B cell (primary cell): ENCODE measurements at regions of chr11 and their contacts with region 1.

Region 1: DNA sequence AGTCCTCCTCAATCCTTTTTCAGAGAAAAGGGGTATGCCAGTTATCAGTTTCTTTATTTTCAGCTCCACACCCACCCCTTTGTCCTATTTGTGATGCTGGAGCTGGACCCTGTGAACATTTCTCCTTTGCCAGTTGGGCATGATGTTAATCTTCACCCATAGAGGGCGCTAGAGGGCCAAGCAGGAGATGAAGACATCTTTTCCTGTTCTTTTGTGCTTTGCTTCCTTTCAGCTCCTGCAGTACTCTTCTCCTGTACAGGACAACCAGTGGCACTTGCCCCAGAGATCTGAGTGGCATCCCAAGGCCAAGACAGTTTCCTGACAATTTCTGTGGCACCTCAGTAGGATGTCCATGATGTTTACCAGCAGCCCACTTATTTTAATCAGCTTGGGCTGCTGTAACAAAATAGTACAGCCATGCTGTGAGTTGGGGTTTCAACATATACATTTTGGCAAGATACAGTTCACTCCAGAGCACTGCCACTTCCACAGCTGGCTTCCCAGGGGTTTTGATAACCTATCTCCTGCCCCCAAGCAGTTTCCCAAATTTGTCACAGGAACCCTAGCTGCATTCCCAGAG is 4.6 kb downstream of the SAA2 start:
- DNase-seq: peak; percentile 77
- ATAC-seq: no peak
- H3K4me3 ChIP-seq: no peak overlapping the region
- H3K4me3 Mint-ChIP-seq: no peak overlapping the region
- H3K27ac ChIP-seq: no peak overlapping the region
- H3K27ac Mint-ChIP-seq: peak overlapping the region; percentile 12
- H3K4me1 ChIP-seq: peaks cover 2 to 19% of the 10 kb centered on the region in 2 donors
- H3K4me1 Mint-ChIP-seq: peaks cover 15% of the 10 kb centered on the region
- H3K27me3 ChIP-seq: peaks cover 0 to 7% (median 6%) of the 10 kb centered on the region in 4 experiments
- H3K27me3 Mint-ChIP-seq: peaks cover 14% of the 10 kb centered on the region
- CTCF ChIP-seq: peak; percentile 90

Region 2: GRCh38 chr11:18229501-18229900 is 14.4 kb before region 1 on chr11:
- CTCF ChIA-PET with region 1: interaction called, 10 read pairs
- POLR2A ChIA-PET with region 1: no interaction called
- intact Hi-C with region 1: no loop called
- DNase-seq: peak; percentile 60
- ATAC-seq: peak; percentile 87
- H3K4me3 ChIP-seq: no peak overlapping the region
- H3K4me3 Mint-ChIP-seq: peak overlapping the region; percentile 37
- H3K27ac ChIP-seq: peak overlapping the region; percentile 25 to 61
- H3K27ac Mint-ChIP-seq: peak overlapping the region; percentile 75
- H3K4me1 ChIP-seq: peaks cover 23 to 30% of the 10 kb centered on the region in 2 donors
- H3K4me1 Mint-ChIP-seq: peaks cover 17% of the 10 kb centered on the region
- H3K27me3 ChIP-seq: no peaks in the 10 kb centered on the region
- H3K27me3 Mint-ChIP-seq: peaks cover 3% of the 10 kb centered on the region
- CTCF ChIP-seq: no peak

Region 3: DNA sequence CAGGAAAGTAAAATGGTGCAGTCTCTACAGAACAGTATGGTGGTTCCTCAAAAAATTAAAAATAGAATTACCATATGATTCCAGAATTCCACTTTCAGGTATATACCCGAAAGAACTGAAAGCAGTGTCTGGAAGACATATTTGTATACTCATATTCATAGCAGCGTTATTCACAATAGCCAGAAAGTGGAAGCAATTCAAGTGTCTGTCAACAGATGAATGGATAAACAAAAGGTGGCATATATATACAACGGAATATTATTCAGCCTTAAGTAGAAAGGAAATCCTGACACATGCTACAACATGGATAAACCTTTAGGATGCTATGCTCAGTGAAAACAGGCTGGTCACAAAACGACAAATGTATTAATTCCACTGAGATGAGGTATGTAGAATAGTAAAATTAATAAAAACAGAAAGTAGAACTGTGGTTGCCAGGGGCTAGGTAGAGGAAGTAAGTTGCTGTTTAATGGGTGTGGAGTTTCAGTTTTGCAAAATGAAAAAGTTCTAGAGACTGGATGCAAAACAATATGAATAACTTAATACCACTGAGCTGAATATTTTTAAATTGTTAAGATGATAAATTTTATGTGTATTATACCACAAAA is 36.7 kb after region 1 on chr11:
- CTCF ChIA-PET with region 1: interaction called, 9 read pairs
- POLR2A ChIA-PET with region 1: no interaction called
- intact Hi-C with region 1: loop called (anchors 5 kb)
- DNase-seq: peak; percentile 64
- ATAC-seq: peak; percentile 78
- H3K4me3 ChIP-seq: peak overlapping the region in 3 of 5 experiments; percentile 13 to 45 (median 44)
- H3K4me3 Mint-ChIP-seq: peak overlapping the region; percentile 78
- H3K27ac ChIP-seq: peak overlapping the region; percentile 72 to 86
- H3K27ac Mint-ChIP-seq: peak overlapping the region; percentile 80
- H3K4me1 ChIP-seq: peaks cover 34 to 39% of the 10 kb centered on the region in 2 donors
- H3K4me1 Mint-ChIP-seq: peaks cover 37% of the 10 kb centered on the region
- H3K27me3 ChIP-seq: no peaks in the 10 kb centered on the region
- H3K27me3 Mint-ChIP-seq: no peaks in the 10 kb centered on the region
- CTCF ChIP-seq: no peak